HAP-1 (cell line): ENCODE measurements at regions of chr13 and their contacts with region 1.

Region 1: DNA sequence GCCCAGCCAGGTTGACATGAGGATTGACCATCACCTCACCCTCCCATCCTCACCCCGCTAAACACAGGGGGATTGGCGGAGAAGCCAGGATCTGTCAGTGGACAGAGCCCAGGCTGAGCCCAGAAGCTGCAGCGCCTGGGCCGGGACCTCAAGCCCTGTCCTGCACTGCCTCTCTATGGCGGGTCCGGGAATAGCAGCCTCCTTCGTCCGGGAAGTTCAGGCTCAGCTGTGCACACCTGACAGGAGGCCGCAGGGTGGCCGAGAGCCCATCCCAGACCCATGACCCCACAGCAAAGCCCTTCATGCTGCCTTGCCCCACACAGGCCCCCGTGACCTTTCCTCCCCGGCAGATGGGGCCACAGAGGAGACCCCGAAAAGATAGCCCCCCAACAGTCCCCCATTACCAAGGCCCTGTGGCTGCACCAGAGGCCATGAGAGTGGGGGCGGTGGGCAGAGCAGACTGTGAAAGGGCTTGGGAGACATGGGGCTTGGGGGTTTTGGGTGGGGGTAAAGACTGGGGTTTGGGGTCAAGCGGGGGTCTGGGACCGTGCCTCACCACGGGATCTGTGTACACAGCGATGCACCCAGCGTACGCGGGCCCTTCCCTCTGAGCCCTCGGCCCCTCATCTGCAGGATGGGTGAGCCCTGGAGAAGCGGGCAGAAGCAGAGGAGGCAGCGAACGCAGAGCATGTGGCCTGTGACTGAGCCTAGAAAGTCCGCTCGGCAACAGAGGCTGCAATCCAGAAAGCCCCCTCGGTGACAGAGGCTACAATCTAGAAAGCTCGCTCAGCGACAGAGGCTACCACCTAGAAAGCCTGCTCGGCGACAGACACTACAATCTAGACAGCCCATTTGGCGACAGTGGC is 68.1 kb downstream of the SPACA7 start:
- DNase-seq: peak; percentile 37 to 85
- H3K4me3 ChIP-seq: no peak overlapping the region
- H3K4me1 ChIP-seq: no peaks in the 10 kb centered on the region
- H3K27me3 ChIP-seq: no peaks in the 10 kb centered on the region

Region 2: DNA sequence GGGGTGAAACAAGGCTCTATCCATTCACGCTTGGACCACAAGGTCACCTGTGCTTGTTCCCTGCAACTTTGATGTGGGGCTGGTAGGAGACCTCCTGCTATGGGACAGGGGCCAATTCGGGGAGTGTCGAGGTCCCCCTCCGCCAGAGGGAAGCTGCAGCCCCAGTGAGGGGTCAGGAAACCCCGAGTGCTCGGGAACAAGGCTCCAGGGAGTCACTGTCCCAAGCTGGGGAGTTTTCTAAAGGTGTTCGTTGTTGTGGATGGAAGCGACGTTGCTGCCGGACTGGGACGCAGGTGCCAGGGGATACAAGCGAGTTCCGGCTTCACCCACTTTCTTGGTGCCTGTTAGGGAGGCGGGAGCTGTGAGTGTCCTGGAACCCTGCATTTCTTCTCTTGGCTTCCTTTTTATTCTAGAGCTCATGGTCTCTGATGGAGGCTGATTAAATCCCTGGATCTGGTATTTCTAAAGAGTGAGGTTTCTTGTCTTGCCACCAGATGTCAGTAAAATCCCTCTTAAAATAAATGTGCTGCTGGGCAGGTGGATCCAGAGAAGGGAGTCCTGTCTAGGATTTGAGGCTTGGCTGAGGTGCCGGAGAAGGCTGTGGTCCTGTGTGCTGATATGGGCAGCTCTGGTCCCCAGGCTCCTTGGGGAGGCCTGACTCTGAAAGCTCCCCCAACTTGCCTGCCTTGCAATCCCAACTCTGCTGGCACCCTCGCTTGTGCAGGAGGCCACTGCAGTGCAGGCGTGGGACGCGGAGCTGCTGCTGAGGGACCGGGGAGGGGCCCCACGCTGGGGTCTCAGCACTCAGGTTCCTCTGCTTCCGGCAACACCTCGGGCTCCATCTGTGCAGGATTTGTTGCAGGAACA is 969.9 kb before region 1 on chr13:
- in situ Hi-C with region 1: loop called (anchors 5 kb)
- DNase-seq: peak; percentile 35 to 53
- H3K4me3 ChIP-seq: no peak overlapping the region
- H3K4me1 ChIP-seq: no peaks in the 10 kb centered on the region
- H3K27me3 ChIP-seq: no peaks in the 10 kb centered on the region

Region 3: DNA sequence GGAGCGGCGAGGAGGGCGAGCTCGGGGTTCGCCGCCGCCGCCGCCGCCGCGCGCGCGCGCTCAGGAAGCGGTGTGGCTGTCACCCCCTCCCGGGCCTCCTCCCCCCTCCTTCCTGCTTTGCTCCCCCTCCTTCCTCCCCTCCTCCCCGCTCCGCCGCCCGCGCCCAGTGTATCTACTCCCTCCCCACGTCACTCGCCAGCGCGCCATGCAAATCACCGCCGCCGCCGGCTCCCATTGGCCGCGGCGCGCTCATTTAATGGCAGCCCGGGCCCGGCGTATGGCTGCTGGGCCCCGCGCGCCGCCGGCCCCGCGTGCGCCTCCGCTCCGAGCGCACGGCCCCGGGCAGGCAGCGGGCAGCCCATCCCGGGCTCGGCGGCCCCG is 377.6 kb before region 1 on chr13:
- in situ Hi-C with region 1: loop called (anchors 25 kb)
- DNase-seq: peak; percentile 12 to 75
- H3K4me3 ChIP-seq: no peak overlapping the region
- H3K4me1 ChIP-seq: no peaks in the 10 kb centered on the region
- H3K27me3 ChIP-seq: peaks cover 38% of the 10 kb centered on the region

Region 4: GRCh38 chr13:112182846-112183531 is 261.2 kb before region 1 on chr13:
- in situ Hi-C with region 1: no loop called
- DNase-seq: no peak
- H3K4me3 ChIP-seq: no peak overlapping the region
- H3K4me1 ChIP-seq: no peaks in the 10 kb centered on the region
- H3K27me3 ChIP-seq: no peaks in the 10 kb centered on the region